CD4-positive, alpha-beta T cell (primary cell): ENCODE measurements at regions of chr15 and their contacts with region 1.

Region 1: DNA sequence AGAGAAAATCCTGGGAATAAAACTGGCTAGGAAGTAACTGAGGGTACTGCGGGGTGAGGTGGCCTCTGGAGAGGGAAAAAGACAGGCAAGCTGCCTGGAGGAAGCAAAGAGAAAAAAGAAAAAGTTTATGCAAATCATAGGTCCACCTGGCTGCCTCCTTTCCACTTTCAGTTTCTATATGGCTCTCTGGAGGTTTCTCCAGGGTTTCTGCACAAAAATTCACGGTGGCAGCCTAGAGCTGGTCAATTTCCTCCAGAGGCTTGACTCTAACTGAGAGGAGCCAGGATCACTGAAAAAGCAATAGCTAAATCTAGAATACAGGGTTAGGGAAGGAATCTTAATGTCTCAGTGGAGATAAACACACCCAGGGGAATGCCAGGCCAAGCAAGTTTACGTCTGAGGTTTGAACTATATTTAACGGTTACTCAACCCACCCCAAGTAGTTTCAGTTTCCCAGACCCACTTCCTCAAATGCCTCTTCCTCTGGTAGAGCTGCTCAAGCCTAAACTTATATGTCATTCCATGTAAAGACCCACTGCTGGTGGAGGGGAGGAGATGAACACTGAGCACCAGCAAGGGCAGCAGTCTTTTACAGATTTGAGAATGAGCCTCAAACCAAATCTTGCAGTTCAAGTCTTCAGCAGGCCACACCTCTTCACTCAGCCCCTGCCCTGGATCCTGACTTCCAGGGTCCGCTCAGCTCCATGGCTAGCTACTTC is 5.7 kb downstream of the LYSMD2 start:
- DNase-seq: peak in 11 of 14 experiments; percentile 10 to 84 (median 24)
- ATAC-seq: peak; percentile 66
- H3K4me3 ChIP-seq: peak overlapping the region; percentile 47
- H3K4me3 Mint-ChIP-seq: peak overlapping the region; percentile 85
- H3K27ac ChIP-seq: peak overlapping the region; percentile 84 to 90
- H3K27ac Mint-ChIP-seq: peak overlapping the region; percentile 93
- H3K4me1 ChIP-seq: peaks cover 75% of the 10 kb centered on the region
- H3K4me1 Mint-ChIP-seq: peaks cover 81% of the 10 kb centered on the region
- H3K27me3 ChIP-seq: no peaks in the 10 kb centered on the region
- H3K27me3 Mint-ChIP-seq: no peaks in the 10 kb centered on the region
- CTCF ChIP-seq: no peak

Region 2: GRCh38 chr15:51641528-51642130 is 90.1 kb before region 1 on chr15:
- CTCF ChIA-PET with region 1: no interaction called
- POLR2A ChIA-PET with region 1: no interaction called
- intact Hi-C with region 1: no loop called
- DNase-seq: no peak
- ATAC-seq: no peak
- H3K4me3 ChIP-seq: no peak overlapping the region
- H3K4me3 Mint-ChIP-seq: no peak overlapping the region
- H3K27ac ChIP-seq: no peak overlapping the region
- H3K27ac Mint-ChIP-seq: no peak overlapping the region
- H3K4me1 ChIP-seq: no peaks in the 10 kb centered on the region
- H3K4me1 Mint-ChIP-seq: no peaks in the 10 kb centered on the region
- H3K27me3 ChIP-seq: no peaks in the 10 kb centered on the region
- H3K27me3 Mint-ChIP-seq: peaks cover 5% of the 10 kb centered on the region
- CTCF ChIP-seq: no peak

Region 3: DNA sequence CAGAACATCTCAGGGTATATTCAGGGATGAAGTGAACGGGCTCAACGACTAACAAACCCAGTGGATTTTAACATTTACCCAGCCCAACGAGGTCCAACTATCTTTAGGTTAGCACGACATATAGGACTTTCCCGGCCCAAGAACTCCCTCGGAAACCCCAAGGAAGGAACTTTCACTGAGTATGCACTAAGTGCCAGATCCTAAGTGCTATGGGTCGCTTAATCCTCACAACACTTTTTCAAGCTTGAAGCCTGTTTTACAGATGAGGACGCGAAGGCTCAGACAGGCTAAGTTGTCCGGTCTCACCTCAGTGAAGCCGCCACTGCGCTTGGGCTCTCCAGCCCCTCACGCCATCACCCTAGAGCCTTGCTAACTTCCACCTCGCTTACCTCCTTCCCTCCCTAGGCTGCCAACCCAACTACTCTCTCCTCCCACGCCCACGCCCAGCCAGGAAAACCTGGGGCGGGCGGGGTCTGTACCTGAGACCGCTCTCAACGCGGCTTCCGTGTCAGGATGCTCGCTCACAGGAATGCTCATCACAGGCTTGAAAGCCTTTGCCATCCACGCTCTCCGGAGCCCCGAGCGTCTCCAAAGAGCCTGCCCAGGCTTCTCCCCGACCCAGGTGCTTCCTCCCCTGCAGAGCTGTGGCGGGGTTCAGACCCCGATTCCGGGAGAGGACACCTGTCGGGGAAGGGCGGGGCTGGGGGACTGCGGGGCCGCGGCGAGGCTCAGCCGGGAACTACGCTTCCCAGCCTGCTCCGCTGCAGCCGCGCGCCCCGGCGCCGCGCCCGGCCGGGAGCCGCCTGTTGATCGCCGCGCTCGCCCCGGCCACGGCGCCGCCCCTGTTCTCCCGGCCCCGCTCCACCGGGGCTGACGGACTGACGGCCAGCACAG is 19.3 kb after region 1 on chr15 and contains the start of gene TMOD2:
- CTCF ChIA-PET with region 1: interaction called, 7 read pairs
- POLR2A ChIA-PET with region 1: interaction called, 45 read pairs
- intact Hi-C with region 1: loop called in 1 of 2 experiments (anchors 2 kb)
- DNase-seq: peak in 12 of 14 experiments; percentile 18 to 75 (median 50)
- ATAC-seq: peak; percentile 85
- H3K4me3 ChIP-seq: peak within 1 kb of the TSS; percentile 63
- H3K4me3 Mint-ChIP-seq: peak within 1 kb of the TSS; percentile 92
- H3K27ac ChIP-seq: no peak within 1 kb of the TSS
- H3K27ac Mint-ChIP-seq: peak within 1 kb of the TSS; percentile 53
- H3K4me1 ChIP-seq: peaks cover 15% of the 10 kb centered on the region
- H3K4me1 Mint-ChIP-seq: peaks cover 51% of the 10 kb centered on the region
- H3K27me3 ChIP-seq: no peaks in the 10 kb centered on the region
- H3K27me3 Mint-ChIP-seq: peaks cover 4% of the 10 kb centered on the region
- CTCF ChIP-seq: no peak
- total RNA-seq, gene TMOD2: 5.6 to 6.9 TPM

Region 4: DNA sequence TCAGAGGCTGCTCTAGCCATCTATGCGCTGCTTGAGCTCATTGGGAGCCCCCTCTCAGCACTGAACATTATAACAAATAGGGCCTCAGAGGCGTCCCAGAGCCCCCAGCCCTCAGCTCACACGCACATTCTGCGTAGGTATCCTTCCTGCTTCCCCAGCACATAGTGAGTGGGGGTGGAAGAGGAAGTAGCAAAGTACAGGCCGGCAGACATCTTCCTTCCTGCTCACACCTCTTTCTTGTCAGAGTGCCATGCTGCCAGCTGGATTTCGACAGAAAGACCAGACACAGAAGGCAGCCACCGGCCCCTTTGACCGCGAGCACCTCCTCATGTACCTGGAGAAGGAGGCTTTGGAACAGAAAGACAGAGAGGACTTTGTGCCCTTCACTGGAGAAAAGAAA is 36.3 kb after region 1 on chr15:
- CTCF ChIA-PET with region 1: no interaction called
- POLR2A ChIA-PET with region 1: interaction called, 13 read pairs
- intact Hi-C with region 1: loop called in 1 of 2 experiments (anchors 5 kb)
- DNase-seq: peak in 4 of 14 experiments; percentile 25 to 40 (median 34)
- ATAC-seq: peak; percentile 78
- H3K4me3 ChIP-seq: no peak overlapping the region
- H3K4me3 Mint-ChIP-seq: no peak overlapping the region
- H3K27ac ChIP-seq: no peak overlapping the region
- H3K27ac Mint-ChIP-seq: peak overlapping the region; percentile 80
- H3K4me1 ChIP-seq: peaks cover 8% of the 10 kb centered on the region
- H3K4me1 Mint-ChIP-seq: peaks cover 16% of the 10 kb centered on the region
- H3K27me3 ChIP-seq: no peaks in the 10 kb centered on the region
- H3K27me3 Mint-ChIP-seq: no peaks in the 10 kb centered on the region
- CTCF ChIP-seq: no peak